ENCODE measurements at regions of chr1 and their contacts with region 1.

Region 1: DNA sequence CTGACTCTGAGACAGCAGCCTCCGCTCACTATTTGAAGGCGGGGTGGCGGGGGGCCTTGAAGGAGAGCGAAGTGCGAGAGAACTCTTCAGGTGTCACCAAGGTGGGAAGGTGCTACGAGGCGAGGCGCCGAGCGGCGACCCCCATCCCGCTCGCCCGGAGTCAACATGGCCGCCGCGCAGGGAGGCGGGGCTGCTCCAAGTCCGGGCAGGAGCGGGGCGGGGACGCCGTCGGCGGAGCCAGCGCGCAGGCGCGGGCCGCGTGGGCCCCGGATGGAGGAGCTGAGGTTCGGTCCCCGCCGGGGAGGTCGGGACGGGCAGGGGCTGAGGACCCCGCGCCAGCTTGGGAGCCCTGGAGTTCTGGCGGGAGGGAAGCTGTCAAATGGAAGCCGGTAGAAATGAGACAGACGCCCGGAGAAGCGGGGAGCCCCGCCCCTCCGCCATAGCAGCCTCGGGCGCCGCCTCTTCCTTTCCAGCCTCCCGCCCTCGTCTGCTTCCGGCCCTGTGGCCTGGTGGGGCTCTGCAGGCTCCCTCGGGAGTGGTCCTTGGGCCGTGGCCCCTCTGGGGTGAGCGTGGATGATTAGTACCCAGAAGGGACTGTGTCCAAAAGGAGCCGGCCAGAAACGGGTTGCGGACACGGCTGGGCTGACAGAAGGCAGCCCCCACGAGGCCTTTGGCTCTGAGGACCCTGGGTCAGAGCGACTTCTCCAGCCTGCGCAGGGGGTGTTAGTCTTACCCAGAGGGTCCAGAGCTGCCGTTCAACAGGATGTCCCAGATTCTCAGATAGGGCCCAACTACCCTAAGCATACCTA is at the start of gene PIGV:
- DNase-seq: peak; percentile 90 to 95
- ATAC-seq: peak; percentile 65 to 87 (median 70)
- H3K4me3 ChIP-seq: peak within 1 kb of the TSS; percentile 79
- H3K4me3 Mint-ChIP-seq: peak within 1 kb of the TSS; percentile 100
- H3K27ac ChIP-seq: peak within 1 kb of the TSS; percentile 96
- H3K27ac Mint-ChIP-seq: peak within 1 kb of the TSS; percentile 100
- H3K4me1 ChIP-seq: peaks cover 63% of the 10 kb centered on the region
- H3K4me1 Mint-ChIP-seq: peaks cover 74 to 84% of the 10 kb centered on the region in 2 donors
- H3K27me3 ChIP-seq: no peaks in the 10 kb centered on the region
- H3K27me3 Mint-ChIP-seq: no peaks in the 10 kb centered on the region
- CTCF ChIP-seq: no peak
- total RNA-seq, gene PIGV: 23.1 to 35.2 (median 30.3) TPM

Region 2: GRCh38 chr1:26472901-26473845 is 314.7 kb before region 1 on chr1:
- intact Hi-C with region 1: no loop called
- DNase-seq: peak; percentile 94 to 98
- ATAC-seq: peak; percentile 86 to 96 (median 87)
- H3K4me3 ChIP-seq: peak overlapping the region; percentile 60
- H3K4me3 Mint-ChIP-seq: peak overlapping the region; percentile 89
- H3K27ac ChIP-seq: peak overlapping the region; percentile 83
- H3K27ac Mint-ChIP-seq: peak overlapping the region; percentile 90 to 91
- H3K4me1 ChIP-seq: peaks cover 28% of the 10 kb centered on the region
- H3K4me1 Mint-ChIP-seq: peaks cover 37 to 45% of the 10 kb centered on the region in 2 donors
- H3K27me3 ChIP-seq: no peaks in the 10 kb centered on the region
- H3K27me3 Mint-ChIP-seq: no peaks in the 10 kb centered on the region
- CTCF ChIP-seq: no peak

Region 3: GRCh38 chr1:26500488-26501175 is 287.3 kb before region 1 on chr1:
- intact Hi-C with region 1: loop called (anchors 1 kb)
- DNase-seq: peak; percentile 85 to 89
- ATAC-seq: peak; percentile 76 to 89 (median 79)
- H3K4me3 ChIP-seq: peak overlapping the region; percentile 82
- H3K4me3 Mint-ChIP-seq: peak overlapping the region; percentile 85
- H3K27ac ChIP-seq: peak overlapping the region; percentile 91
- H3K27ac Mint-ChIP-seq: peak overlapping the region; percentile 76 to 77
- H3K4me1 ChIP-seq: peaks cover 15% of the 10 kb centered on the region
- H3K4me1 Mint-ChIP-seq: peaks cover 0 to 16% of the 10 kb centered on the region in 2 donors
- H3K27me3 ChIP-seq: no peaks in the 10 kb centered on the region
- H3K27me3 Mint-ChIP-seq: no peaks in the 10 kb centered on the region
- CTCF ChIP-seq: peak; percentile 50

Region 4: DNA sequence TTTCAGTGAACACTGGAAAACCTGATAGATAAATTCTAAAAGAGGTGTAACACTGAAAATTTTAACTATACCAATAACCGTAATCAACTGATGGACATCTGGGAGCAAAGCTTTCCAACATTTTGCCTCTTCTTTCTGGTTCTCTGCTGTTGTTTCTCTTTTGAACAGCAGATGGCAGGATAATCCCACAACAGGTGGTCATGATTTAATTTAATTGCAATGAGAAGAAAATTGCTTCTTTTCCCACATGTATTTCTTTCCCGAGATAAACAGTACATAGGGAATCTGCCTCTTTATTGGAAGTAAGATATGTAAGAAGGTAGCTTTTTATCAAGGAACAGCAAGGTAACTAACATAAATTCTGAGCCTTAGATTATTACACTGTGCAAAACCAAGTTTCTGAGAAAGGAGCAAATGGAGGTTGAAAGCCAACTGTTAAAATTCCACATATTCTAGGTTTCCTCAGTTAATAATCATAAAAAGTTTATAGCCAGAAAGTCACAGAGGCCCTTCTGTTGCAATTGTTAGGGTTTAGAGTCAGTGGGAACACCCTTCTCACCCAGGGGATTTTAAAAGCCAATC is 185.4 kb before region 1 on chr1:
- intact Hi-C with region 1: loop called (anchors 1 kb)
- DNase-seq: peak in 1 of 2 donors; percentile 86
- ATAC-seq: peak; percentile 49 to 83 (median 69)
- H3K4me3 ChIP-seq: no peak overlapping the region
- H3K4me3 Mint-ChIP-seq: no peak overlapping the region
- H3K27ac ChIP-seq: no peak overlapping the region
- H3K27ac Mint-ChIP-seq: no peak overlapping the region
- H3K4me1 ChIP-seq: no peaks in the 10 kb centered on the region
- H3K4me1 Mint-ChIP-seq: peaks cover 9% of the 10 kb centered on the region in 2 donors
- H3K27me3 ChIP-seq: no peaks in the 10 kb centered on the region
- H3K27me3 Mint-ChIP-seq: peaks cover 0 to 5% of the 10 kb centered on the region in 2 donors
- CTCF ChIP-seq: peak; percentile 98

Region 5: DNA sequence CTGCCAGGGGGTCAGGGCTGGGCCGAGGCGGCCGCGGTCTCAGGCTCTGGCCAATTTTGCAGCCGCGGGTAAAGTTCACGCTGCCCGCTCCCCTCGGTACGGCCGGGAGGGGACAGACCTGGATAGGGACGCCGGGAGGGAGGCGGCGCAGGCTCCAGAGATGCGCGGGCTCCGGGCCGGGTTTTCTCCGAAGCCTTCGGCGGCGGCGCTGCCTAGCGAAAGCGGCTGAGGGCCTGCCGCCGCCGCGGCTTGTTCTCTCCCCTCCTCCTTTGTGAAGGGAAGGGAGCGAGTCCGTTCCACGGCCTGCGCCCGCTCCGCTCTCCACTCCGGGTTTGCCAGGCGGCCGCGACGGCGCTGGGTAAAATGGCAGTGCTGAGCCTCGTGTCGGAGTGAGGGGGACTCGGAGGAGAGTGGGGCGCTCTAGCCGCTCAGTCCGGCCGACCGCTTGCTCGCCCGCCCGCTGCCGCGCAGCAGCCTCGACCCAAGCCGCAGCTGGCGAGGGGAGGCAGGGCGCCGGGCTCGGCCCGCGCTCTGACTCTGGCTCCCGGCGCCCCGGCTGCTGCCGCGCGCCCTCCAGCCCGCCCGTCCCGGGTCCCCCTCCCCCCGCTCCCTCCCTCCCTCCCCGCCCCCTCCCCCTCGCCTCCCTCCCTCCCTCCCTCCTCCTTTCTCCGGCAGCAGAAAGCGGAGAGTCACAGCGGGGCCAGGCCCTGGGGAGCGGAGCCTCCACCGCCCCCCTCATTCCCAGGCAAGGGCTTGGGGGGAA is 92.4 kb before region 1 on chr1 and contains the start of gene ARID1A:
- intact Hi-C with region 1: loop called (anchors 1 kb)
- DNase-seq: peak; percentile 97 to 98
- ATAC-seq: peak; percentile 63 to 83 (median 68)
- H3K4me3 ChIP-seq: peak within 1 kb of the TSS; percentile 71
- H3K4me3 Mint-ChIP-seq: peak within 1 kb of the TSS; percentile 98
- H3K27ac ChIP-seq: peak within 1 kb of the TSS; percentile 84
- H3K27ac Mint-ChIP-seq: peak within 1 kb of the TSS; percentile 91 to 98
- H3K4me1 ChIP-seq: peaks cover 32% of the 10 kb centered on the region
- H3K4me1 Mint-ChIP-seq: peaks cover 37 to 40% of the 10 kb centered on the region in 2 donors
- H3K27me3 ChIP-seq: no peaks in the 10 kb centered on the region
- H3K27me3 Mint-ChIP-seq: no peaks in the 10 kb centered on the region
- CTCF ChIP-seq: no peak
- total RNA-seq, gene ARID1A: 199 to 214 (median 202) TPM

Region 6: DNA sequence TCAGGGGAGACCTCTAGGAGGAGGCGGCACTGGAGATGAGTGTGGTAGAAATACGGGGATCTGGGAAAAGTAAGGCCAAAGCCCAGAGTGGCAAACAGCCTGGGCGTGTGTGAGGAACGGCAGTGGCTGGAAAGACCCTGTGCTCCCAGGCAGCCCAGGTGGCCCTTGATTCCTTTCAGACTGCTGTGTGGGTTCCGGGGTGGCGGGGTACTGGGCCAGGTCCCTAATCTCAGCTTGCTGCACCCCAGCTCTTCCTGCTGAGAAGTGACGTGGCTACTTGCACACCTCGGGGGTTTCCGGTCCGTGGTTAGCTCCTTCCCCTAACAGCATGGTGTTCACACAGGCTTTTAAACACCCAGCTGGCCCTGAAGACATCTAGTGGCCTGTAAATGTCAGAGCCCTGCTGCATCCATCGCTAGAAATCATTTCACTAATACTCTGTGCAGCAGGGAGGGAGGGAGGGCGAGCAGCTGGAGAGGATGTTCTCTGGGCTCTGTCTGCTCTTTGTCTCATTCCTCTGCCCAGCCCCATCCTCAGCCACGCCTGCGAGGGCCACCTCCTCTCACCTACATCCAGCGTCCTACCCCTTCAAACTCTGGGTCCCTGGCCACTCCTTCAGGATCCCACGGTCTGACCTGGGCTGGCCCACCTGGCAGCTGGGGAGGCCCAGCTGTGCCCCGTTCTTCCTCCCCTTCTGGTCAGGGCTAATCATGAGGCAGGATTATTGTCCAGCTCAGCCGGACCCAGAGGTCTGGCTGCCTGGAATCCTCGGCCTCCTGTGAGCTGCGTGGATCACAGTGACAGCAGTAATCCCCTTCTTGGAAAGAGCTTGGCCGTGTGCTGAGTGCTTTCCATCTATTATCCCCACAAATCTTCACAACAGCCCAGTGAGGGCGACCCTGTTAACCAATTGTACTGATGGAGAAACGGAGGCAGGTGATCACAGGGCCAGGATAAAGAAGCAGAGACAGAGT is 45.8 kb after region 1 on chr1:
- intact Hi-C with region 1: loop called (anchors 2 kb)
- DNase-seq: peak; percentile 83 to 98
- ATAC-seq: peak; percentile 93 to 98 (median 96)
- H3K4me3 ChIP-seq: peak overlapping the region; percentile 17
- H3K4me3 Mint-ChIP-seq: peak overlapping the region; percentile 87
- H3K27ac ChIP-seq: peak overlapping the region; percentile 98
- H3K27ac Mint-ChIP-seq: peak overlapping the region; percentile 99 to 100
- H3K4me1 ChIP-seq: peaks cover 70% of the 10 kb centered on the region
- H3K4me1 Mint-ChIP-seq: peaks cover 64 to 68% of the 10 kb centered on the region in 2 donors
- H3K27me3 ChIP-seq: no peaks in the 10 kb centered on the region
- H3K27me3 Mint-ChIP-seq: no peaks in the 10 kb centered on the region
- CTCF ChIP-seq: peak; percentile 25